Panc1 (cell line): ENCODE measurements at regions of chr17 and their contacts with region 1.

Region 1: GRCh38 chr17:74659898-74660297 is 36.4 kb upstream of the CD300E start:
- DNase-seq: no peak
- ATAC-seq: no peak
- H3K4me3 ChIP-seq: no peak overlapping the region
- H3K27ac ChIP-seq: no peak overlapping the region
- H3K4me1 ChIP-seq: no peaks in the 10 kb centered on the region
- H3K27me3 ChIP-seq: peaks cover 36% of the 10 kb centered on the region
- CTCF ChIP-seq: no peak

Region 2: DNA sequence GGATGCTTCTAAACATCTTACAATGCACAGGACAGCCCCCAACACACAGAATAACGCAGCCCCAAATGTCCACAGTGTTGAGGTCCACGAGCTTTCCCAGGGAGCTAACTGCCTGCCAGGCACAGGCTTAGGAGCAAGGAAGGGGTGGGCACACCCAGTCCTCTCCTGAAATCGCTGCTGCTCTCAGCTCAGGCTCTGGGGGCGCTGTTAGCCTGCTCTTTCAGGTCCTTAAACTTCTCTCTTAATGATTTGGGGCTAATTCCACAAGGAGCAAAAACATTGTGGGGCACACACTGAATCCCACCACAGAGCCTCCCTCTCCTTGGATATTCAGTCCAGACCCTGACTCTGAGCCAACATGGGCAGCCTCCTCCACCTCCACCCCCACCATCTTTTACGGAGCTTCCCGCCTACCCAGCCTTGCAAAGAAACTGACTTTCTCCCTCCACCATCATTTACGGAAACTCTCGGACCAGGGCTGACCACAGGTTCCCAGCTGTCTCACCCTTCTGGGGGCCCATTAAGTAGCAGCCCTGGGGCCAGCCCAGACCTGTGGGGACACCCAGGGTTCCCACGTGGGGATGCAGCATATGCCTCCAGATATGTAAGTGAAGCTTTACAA is 93.7 kb before region 1 on chr17:
- CTCF ChIA-PET with region 1: interaction called, 10 read pairs
- POLR2A ChIA-PET with region 1: no interaction called
- in situ Hi-C with region 1: no loop called
- intact Hi-C with region 1: no loop called
- DNase-seq: peak; percentile 27
- ATAC-seq: peak; percentile 58
- H3K4me3 ChIP-seq: no peak overlapping the region
- H3K27ac ChIP-seq: no peak overlapping the region
- H3K4me1 ChIP-seq: peaks cover 11% of the 10 kb centered on the region; the same call in 1 of the 2 replicates
- H3K27me3 ChIP-seq: peaks cover 4% of the 10 kb centered on the region; the same call in 1 of the 2 replicates
- CTCF ChIP-seq: peak; percentile 92

Region 3: GRCh38 chr17:74647871-74648672 is 11.8 kb before region 1 on chr17:
- CTCF ChIA-PET with region 1: interaction called, 12 read pairs
- POLR2A ChIA-PET with region 1: no interaction called
- in situ Hi-C with region 1: no loop called
- intact Hi-C with region 1: no loop called
- DNase-seq: no peak
- ATAC-seq: no peak
- H3K4me3 ChIP-seq: no peak overlapping the region
- H3K27ac ChIP-seq: no peak overlapping the region
- H3K4me1 ChIP-seq: no peaks in the 10 kb centered on the region
- H3K27me3 ChIP-seq: peaks cover 49% of the 10 kb centered on the region
- CTCF ChIP-seq: no peak

Region 4: DNA sequence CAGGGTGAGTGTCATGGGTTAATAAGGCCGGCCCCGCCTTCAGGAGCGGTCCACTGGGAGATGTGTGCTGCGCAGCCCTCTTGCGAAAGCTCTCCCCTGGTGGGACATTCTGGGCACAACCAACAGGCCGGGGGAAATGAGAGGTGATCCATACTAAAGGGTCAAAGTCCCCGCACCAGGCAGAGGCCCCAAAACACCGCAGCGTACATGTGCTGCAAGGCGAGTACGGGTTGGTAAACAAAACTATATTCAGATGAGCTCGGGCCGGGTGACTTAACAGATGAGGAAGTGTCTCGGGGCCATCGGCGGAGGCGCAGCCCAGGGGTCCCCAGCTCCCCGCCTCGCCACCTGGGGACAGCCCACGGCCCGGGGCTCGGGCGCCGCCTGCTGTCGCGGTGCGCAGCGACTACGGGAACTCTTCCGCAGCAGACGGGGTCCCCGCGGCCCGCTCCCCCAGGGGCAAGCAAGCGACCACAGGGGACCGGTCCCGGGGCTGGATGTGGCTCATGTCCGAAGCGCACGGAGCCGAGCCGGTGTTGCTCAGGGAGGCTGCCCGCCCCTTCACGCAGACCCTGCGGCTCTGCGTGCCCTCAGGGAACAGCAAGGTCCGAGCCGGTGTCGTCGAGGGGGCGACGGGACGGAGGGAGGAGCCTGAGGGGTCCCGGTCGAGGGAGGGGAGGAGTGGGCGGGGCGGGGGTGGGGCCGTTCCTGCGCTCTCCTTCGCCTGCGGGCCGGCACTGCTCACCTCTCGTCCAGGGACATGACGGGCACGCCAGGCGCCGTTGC is 76.8 kb after region 1 on chr17 and contains the start of gene RAB37:
- CTCF ChIA-PET with region 1: interaction called, 103 read pairs
- POLR2A ChIA-PET with region 1: no interaction called
- in situ Hi-C with region 1: no loop called
- intact Hi-C with region 1: loop called (anchors 1 kb)
- DNase-seq: no peak
- ATAC-seq: peak; percentile 57
- H3K4me3 ChIP-seq: peak within 1 kb of the TSS; percentile 28 to 53
- H3K27ac ChIP-seq: no peak within 1 kb of the TSS
- H3K4me1 ChIP-seq: peaks cover 7% of the 10 kb centered on the region
- H3K27me3 ChIP-seq: 0 out of 2 replicates have a peak, but pooled peaks cover 3% of the 10 kb centered on the region
- CTCF ChIP-seq: peak; percentile 85
- total RNA-seq, gene RAB37: 1.5 TPM

Region 5: GRCh38 chr17:74770498-74771318 is 110.8 kb after region 1 on chr17:
- CTCF ChIA-PET with region 1: interaction called, 11 read pairs
- POLR2A ChIA-PET with region 1: no interaction called
- in situ Hi-C with region 1: no loop called
- intact Hi-C with region 1: no loop called
- DNase-seq: no peak
- ATAC-seq: peak; percentile 80
- H3K4me3 ChIP-seq: no peak overlapping the region
- H3K27ac ChIP-seq: no peak overlapping the region
- H3K4me1 ChIP-seq: peaks cover 43% of the 10 kb centered on the region
- H3K27me3 ChIP-seq: no peaks in the 10 kb centered on the region
- CTCF ChIP-seq: peak; percentile 96